OCI-LY7 (cell line): ENCODE measurements at regions of chr10 and their contacts with region 1.

Region 1: GRCh38 chr10:119368991-119369869 is 161.9 kb downstream of the GRK5 start:
- DNase-seq: peak; percentile 94
- H3K4me3 ChIP-seq: peak overlapping the region; percentile 59
- H3K27ac ChIP-seq: peak overlapping the region; percentile 69
- H3K4me1 ChIP-seq: peaks cover 39% of the 10 kb centered on the region
- CTCF ChIP-seq: no peak

Region 2: GRCh38 chr10:119235356-119235755 is 133.9 kb before region 1 on chr10:
- CTCF ChIA-PET with region 1: no interaction called
- POLR2A ChIA-PET with region 1: interaction called, 11 read pairs
- intact Hi-C with region 1: no loop called
- DNase-seq: no peak
- H3K4me3 ChIP-seq: no peak overlapping the region
- H3K27ac ChIP-seq: no peak overlapping the region
- H3K4me1 ChIP-seq: peaks cover 12% of the 10 kb centered on the region
- CTCF ChIP-seq: no peak

Region 3: DNA sequence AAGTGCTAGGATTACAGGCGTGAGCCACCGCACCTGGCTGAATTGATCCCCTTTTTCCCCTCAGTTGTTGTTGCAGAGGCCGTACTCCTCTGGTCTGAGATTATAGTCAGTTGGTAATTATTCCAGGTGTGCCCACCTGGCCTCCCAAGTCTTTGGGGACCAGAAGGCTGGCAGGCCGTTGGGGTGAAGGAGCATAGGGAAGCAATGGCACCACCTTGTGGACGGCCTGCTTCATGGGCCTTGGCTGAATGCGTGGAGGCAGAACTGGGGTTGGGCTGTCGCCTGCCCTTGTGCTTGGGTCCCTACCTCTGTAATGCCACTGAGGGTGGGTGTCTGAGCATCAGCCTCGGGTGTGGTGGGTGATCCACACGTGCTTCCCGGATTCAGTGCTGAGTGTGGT is 47.6 kb after region 1 on chr10:
- CTCF ChIA-PET with region 1: no interaction called
- POLR2A ChIA-PET with region 1: no interaction called
- intact Hi-C with region 1: loop called (anchors 1 kb)
- DNase-seq: peak; percentile 82
- H3K4me3 ChIP-seq: no peak overlapping the region
- H3K27ac ChIP-seq: no peak overlapping the region
- H3K4me1 ChIP-seq: no peaks in the 10 kb centered on the region
- CTCF ChIP-seq: peak; percentile 89